ENCODE measurements at regions of chr1 and their contacts with region 1.

Region 1: GRCh38 chr1:14759838-14760237 is 161.4 kb downstream of the KAZN start:
- DNase-seq: no peak
- ATAC-seq: no peak
- H3K4me3 ChIP-seq: no peak overlapping the region
- H3K27ac ChIP-seq: no peak overlapping the region
- H3K4me1 ChIP-seq: no peaks in the 10 kb centered on the region
- H3K27me3 ChIP-seq: peaks cover 7 to 68% of the 10 kb centered on the region in 2 experiments; a peak in 4 of 5 replicates
- CTCF ChIP-seq: no peak
- EP300 ChIP-seq: no peak
- POLR2A ChIP-seq: no peak
- RAD21 ChIP-seq: no peak

Region 2: DNA sequence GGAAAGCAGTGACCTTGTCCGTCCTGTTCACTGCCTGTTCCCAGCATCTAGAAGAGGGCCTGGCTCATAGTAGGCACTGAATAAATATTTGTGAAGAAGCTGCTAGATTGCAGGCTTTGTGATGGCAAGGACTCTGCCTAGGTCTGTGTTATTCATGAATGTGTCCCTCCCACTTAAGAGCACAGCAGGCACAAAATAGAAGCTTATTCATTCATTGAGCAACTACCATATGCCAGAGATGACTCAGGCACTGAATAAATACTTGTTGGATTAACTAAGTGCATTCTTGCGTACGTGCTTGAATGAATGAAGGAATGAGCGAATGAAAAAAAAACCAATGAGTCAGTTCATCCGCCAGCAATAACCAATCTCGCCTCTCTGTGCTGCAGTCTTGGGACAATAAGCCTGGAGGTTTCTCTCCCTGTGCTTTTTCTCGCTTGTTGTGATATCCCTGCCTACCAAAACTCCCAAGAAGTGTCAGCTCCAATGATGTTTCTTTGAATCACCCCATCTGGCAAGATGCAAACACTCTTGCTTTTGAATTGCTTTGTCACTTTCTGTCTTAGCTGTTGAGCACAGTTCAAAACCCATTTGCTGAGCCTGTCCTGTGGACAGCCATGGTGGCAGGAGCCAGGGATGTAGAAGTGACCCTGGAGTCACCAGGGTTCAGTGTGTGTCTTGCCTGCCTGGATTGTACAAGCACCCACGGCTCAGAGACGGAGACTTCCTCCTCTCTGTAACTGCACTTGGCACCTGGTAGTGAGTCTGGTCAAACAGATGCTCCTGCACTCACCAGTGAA is 17.5 kb before region 1 on chr1:
- CTCF ChIA-PET with region 1: no interaction called
- POLR2A ChIA-PET with region 1: no interaction called
- in situ Hi-C with region 1: no loop called
- intact Hi-C with region 1: loop called (anchors 1 kb)
- DNase-seq: peak; percentile 56
- ATAC-seq: no peak
- H3K4me3 ChIP-seq: no peak overlapping the region
- H3K27ac ChIP-seq: no peak overlapping the region
- H3K4me1 ChIP-seq: no peaks in the 10 kb centered on the region
- H3K27me3 ChIP-seq: peaks cover 0 to 49% of the 10 kb centered on the region in 2 experiments; a peak in 3 of 5 replicates
- CTCF ChIP-seq: no peak
- EP300 ChIP-seq: no peak
- POLR2A ChIP-seq: no peak
- RAD21 ChIP-seq: no peak

Region 3: GRCh38 chr1:14835725-14836124 is 75.9 kb after region 1 on chr1:
- CTCF ChIA-PET with region 1: no interaction called
- POLR2A ChIA-PET with region 1: no interaction called
- in situ Hi-C with region 1: no loop called
- intact Hi-C with region 1: no loop called
- DNase-seq: no peak
- ATAC-seq: no peak
- H3K4me3 ChIP-seq: no peak overlapping the region
- H3K27ac ChIP-seq: no peak overlapping the region
- H3K4me1 ChIP-seq: no peaks in the 10 kb centered on the region
- H3K27me3 ChIP-seq: peaks cover 2 to 21% of the 10 kb centered on the region in 2 experiments; a peak in 2 of 5 replicates
- CTCF ChIP-seq: no peak
- EP300 ChIP-seq: no peak
- POLR2A ChIP-seq: no peak
- RAD21 ChIP-seq: no peak

Measured in HepG2 (cell line).